Activated CD4-positive, alpha-beta T cell treated with anti-CD3 and anti-CD28 coated beads for 36 hours (primary cell): ENCODE measurements at regions of chr16 and their contacts with region 1.

Region 1: DNA sequence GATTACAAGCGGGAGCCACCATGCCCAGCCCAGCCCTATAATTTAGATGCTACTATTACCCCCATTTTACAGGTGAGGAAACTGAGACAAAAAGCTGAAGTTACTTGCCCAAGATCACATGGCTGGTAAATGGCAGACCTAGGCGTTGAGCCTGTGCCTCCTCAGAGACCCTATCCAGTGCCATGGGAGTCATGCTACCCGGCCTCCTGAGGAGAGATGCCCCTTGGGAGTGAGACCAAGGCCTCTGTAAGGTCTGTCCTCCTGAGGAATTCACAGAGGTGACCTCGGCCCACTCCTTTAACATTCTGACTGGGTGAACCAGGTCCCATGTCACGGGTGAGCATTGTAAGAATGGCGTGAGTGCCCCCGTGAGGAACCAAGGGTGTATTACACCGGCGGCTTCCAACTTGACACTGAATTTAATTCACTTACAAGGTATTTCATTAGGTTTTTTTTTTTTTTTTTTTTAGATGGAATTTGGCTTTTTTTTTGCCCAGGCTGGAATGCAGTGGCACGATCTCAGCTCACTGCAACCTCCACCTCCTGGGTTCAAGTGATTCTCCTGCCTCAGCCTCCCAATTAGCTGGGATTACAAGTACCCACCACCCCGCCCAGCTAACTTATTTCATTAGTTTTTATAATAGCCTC is 95.7 kb downstream of the ABCC6 start:
- DNase-seq: peak; percentile 83
- ATAC-seq: peak; percentile 85
- H3K4me3 Mint-ChIP-seq: no peak overlapping the region
- H3K27ac Mint-ChIP-seq: peak overlapping the region; percentile 33
- H3K4me1 Mint-ChIP-seq: peaks cover 3% of the 10 kb centered on the region
- H3K27me3 Mint-ChIP-seq: no peaks in the 10 kb centered on the region

Region 2: DNA sequence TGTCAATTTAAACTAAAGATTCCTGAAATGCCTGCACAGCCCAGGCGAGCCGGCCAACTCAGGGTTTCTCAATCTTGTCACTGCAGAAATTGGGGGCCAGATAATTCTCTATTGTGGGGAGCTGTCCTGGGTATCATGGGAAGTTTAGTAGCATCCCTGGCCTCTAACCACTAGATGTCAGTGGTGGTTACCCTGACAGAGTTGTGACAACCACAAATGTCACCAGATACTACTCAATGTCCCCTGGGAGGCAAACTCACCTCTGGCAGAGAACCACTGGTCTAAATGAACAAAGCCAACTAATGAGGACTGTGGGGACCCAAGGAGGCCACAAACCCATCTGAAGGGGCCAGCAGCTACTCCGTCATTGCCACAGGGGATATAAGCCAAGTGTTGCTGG is 361.7 kb before region 1 on chr16:
- CTCF ChIA-PET with region 1: interaction called, 4 read pairs
- POLR2A ChIA-PET with region 1: no interaction called
- intact Hi-C with region 1: loop called (anchors 1 to 2 kb)
- DNase-seq: peak; percentile 44
- ATAC-seq: peak; percentile 90
- H3K4me3 Mint-ChIP-seq: no peak overlapping the region
- H3K27ac Mint-ChIP-seq: no peak overlapping the region
- H3K4me1 Mint-ChIP-seq: no peaks in the 10 kb centered on the region
- H3K27me3 Mint-ChIP-seq: peaks cover 7% of the 10 kb centered on the region

Region 3: GRCh38 chr16:15822957-15823356 is 304.6 kb before region 1 on chr16:
- CTCF ChIA-PET with region 1: interaction called, 4 read pairs
- POLR2A ChIA-PET with region 1: no interaction called
- intact Hi-C with region 1: loop called in 1 of 2 experiments (anchors 1 kb)
- DNase-seq: no peak
- ATAC-seq: no peak
- H3K4me3 Mint-ChIP-seq: no peak overlapping the region
- H3K27ac Mint-ChIP-seq: no peak overlapping the region
- H3K4me1 Mint-ChIP-seq: no peaks in the 10 kb centered on the region
- H3K27me3 Mint-ChIP-seq: no peaks in the 10 kb centered on the region

Region 4: DNA sequence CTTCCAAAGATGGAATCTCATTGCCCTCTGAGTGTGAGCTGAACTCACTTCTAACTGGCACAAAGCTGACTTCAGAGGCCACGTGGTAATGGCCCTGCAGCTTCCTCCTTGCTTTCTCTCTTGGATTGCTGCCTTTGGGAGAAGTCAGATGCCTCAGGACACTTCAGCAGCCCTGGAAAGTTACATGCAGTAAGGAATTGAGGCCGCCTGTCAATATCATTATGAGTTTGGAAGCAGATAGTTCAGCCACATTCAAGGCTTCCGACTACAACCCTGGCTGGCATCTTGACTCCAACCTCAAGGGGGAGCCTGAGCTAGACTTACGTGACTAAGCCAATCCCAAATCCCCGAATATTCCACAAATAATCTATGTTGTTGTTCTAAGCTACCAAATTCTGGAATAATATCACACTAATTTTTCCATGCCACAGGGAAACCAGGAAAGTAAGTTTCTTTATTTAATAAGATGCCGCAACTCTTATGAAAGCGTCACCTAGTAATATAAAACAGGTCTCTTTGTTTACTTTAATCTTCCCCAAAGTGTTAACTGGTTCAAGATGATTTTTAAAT is 252.8 kb before region 1 on chr16:
- CTCF ChIA-PET with region 1: no interaction called
- POLR2A ChIA-PET with region 1: no interaction called
- intact Hi-C with region 1: loop called (anchors 1 to 5 kb)
- DNase-seq: peak; percentile 38
- ATAC-seq: no peak
- H3K4me3 Mint-ChIP-seq: no peak overlapping the region
- H3K27ac Mint-ChIP-seq: no peak overlapping the region
- H3K4me1 Mint-ChIP-seq: peaks cover 9% of the 10 kb centered on the region
- H3K27me3 Mint-ChIP-seq: no peaks in the 10 kb centered on the region

Region 5: GRCh38 chr16:16021988-16022682 is 105.5 kb before region 1 on chr16:
- CTCF ChIA-PET with region 1: no interaction called
- POLR2A ChIA-PET with region 1: no interaction called
- intact Hi-C with region 1: no loop called
- DNase-seq: no peak
- ATAC-seq: no peak
- H3K4me3 Mint-ChIP-seq: no peak overlapping the region
- H3K27ac Mint-ChIP-seq: no peak overlapping the region
- H3K4me1 Mint-ChIP-seq: peaks cover 35% of the 10 kb centered on the region
- H3K27me3 Mint-ChIP-seq: no peaks in the 10 kb centered on the region